GM10248 (cell line): ENCODE measurements at regions of chr7 and their contacts with region 1.

Region 1: DNA sequence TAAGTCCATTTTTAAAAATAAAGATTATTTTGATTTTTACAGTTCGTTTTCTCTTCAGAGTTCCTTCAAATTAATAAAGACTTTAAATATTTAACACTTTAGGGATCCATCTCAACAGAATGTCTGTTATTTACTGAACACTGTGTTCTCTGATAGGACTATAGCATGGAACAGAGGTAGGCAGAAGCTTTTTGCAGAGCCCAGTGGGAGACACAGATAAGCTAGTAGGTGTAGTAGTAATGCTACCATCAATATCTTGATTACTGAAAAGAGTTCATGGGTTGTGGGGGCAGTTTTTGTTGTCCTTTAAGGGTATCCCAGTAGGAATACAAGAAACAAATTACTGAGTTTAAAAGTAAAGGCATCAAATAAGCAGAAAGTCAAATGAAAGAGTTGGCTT is 140.5 kb downstream of the HBP1 start:
- DNase-seq: no peak
- CTCF ChIP-seq: no peak

Region 2: GRCh38 chr7:107201795-107202450 is 107.4 kb before region 1 on chr7:
- CTCF ChIA-PET with region 1: no interaction called
- POLR2A ChIA-PET with region 1: no interaction called
- DNase-seq: peak; percentile 32
- CTCF ChIP-seq: peak; percentile 59

Region 3: GRCh38 chr7:107291438-107291837 is 17.9 kb before region 1 on chr7:
- CTCF ChIA-PET with region 1: interaction called, 10 read pairs
- POLR2A ChIA-PET with region 1: no interaction called
- DNase-seq: no peak
- CTCF ChIP-seq: no peak

Region 4: DNA sequence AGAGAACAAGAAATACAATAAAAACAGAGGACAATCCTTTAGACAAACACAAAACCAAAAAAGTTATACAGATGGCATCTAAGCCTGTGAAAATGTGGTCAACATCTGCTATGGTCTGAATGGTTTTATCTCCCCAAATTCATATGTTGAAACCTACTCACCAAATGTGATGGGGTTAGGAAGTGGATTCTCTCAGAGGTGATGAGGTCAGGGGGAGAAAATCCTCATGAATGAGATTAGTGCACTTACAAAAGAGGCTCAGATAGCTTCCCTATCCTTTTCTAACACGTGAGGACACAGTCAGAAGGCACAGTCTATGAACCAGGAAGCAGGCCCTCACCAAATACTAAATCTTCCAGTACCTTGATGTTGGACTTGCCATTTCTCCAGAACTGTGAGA is 12.7 kb after region 1 on chr7:
- CTCF ChIA-PET with region 1: no interaction called
- POLR2A ChIA-PET with region 1: no interaction called
- DNase-seq: no peak
- CTCF ChIP-seq: no peak